ENCODE measurements at regions of chr9 and their contacts with region 1.

Region 1: DNA sequence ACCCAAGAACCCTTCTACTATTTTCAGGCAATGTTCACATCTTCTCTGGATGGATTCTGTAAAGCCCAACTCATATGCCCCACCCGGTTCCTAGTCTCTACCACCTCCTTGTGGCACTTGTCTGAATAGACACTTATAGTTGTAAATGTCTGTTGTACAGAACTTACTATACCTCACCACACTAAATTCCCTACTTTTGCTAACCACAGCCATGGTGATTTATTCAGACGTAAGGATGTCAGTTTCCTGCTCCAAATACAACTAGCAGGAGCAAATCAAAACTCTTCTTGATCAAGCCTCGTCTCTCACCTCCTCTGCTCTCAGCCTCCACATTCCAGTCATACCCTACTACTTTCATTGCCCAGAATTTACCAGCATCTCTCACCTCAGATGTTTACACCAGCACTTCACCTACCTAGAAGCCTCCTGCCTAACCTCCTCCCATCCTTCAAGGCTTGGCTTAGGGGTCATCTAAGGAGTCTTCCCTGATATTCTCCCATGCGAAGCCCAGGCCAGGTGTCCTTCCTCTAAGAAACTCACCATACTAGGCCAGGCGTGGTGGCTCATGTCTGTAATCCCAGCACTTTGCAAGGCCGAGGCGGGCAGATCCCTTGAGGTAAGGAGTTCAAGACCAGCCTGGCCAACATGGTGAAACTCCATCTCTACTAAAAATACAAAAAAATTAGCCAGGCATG is 75.5 kb downstream of the MAPKAP1 start:
- DNase-seq: no peak
- H3K4me3 ChIP-seq: no peak overlapping the region
- H3K27ac ChIP-seq: no peak overlapping the region
- H3K4me1 ChIP-seq: peaks cover 40% of the 10 kb centered on the region
- H3K27me3 ChIP-seq: no peaks in the 10 kb centered on the region
- CTCF ChIP-seq: peak; percentile 68

Region 2: GRCh38 chr9:125407974-125408900 is 223.3 kb before region 1 on chr9:
- intact Hi-C with region 1: loop called (anchors 5 kb)
- DNase-seq: peak; percentile 81
- H3K4me3 ChIP-seq: peak overlapping the region; percentile 80
- H3K27ac ChIP-seq: no peak overlapping the region
- H3K4me1 ChIP-seq: peaks cover 12% of the 10 kb centered on the region
- H3K27me3 ChIP-seq: peaks cover 7% of the 10 kb centered on the region
- CTCF ChIP-seq: peak; percentile 93